ENCODE measurements at regions of chr4 and their contacts with region 1.

Region 1: DNA sequence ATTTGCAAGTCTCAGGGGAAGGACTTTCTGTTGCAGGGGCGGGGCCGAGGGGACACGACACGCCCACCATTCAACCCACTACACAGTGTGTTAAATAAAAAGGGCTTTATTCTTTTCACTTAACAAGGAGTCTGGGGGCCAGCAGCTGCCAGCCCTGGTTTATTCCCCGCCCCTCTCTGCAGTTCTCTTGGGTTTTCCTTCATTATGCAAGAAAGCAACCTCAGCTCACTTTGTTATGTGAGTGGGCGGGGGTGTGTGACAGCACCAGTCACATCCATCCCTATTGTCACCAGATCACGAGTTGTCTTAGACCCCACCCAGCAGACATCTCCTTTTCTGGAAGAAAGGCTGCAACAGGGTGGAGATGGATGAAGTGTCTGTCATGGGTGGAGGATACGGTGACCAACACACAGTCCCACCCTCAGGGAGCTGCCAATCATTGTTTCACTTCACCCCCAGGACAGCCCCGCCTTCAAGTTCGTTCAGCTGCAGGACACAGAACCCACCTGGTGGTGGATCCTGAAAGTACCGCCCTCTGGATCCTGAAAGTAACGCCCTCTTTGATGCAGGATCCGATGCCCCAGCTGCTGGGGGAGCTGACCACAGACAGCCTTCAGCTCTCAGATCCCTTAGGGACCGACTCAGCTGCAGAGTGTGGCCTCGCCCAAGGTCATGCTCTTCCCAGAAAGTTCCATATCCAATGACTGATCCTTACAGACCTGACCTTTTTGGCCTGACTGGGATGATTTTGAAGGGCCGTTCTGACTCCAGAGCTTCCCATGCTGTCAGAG is 79.6 kb downstream of the SMIM20 start:
- DNase-seq: peak; percentile 59
- ATAC-seq: peak; percentile 79
- H3K4me3 Mint-ChIP-seq: no peak overlapping the region
- H3K27ac Mint-ChIP-seq: no peak overlapping the region
- H3K4me1 Mint-ChIP-seq: peaks cover 10% of the 10 kb centered on the region
- H3K27me3 Mint-ChIP-seq: peaks cover 2% of the 10 kb centered on the region

Region 2: GRCh38 chr4:25977397-25978170 is 16.0 kb before region 1 on chr4:
- CTCF ChIA-PET with region 1: interaction called, 24 read pairs
- POLR2A ChIA-PET with region 1: no interaction called
- intact Hi-C with region 1: no loop called
- DNase-seq: no peak
- ATAC-seq: no peak
- H3K4me3 Mint-ChIP-seq: no peak overlapping the region
- H3K27ac Mint-ChIP-seq: no peak overlapping the region
- H3K4me1 Mint-ChIP-seq: no peaks in the 10 kb centered on the region
- H3K27me3 Mint-ChIP-seq: no peaks in the 10 kb centered on the region

Region 3: GRCh38 chr4:26325191-26325590 is 331.6 kb after region 1 on chr4:
- CTCF ChIA-PET with region 1: interaction called, 4 read pairs
- POLR2A ChIA-PET with region 1: no interaction called
- intact Hi-C with region 1: loop called (anchors 1 kb)
- DNase-seq: no peak
- ATAC-seq: peak; percentile 55
- H3K4me3 Mint-ChIP-seq: peak overlapping the region; percentile 41
- H3K27ac Mint-ChIP-seq: peak overlapping the region; percentile 67
- H3K4me1 Mint-ChIP-seq: peaks cover 47% of the 10 kb centered on the region
- H3K27me3 Mint-ChIP-seq: no peaks in the 10 kb centered on the region

Measured in activated CD4-positive, alpha-beta T cell treated with anti-CD3 and anti-CD28 coated beads for 36 hours (primary cell).